ENCODE measurements at regions of chr9 and their contacts with region 1.

Region 1: GRCh38 chr9:130805510-130806326 is 29.3 kb upstream of the ABL1 start:
- DNase-seq: no peak
- H3K4me3 ChIP-seq: no peak overlapping the region
- H3K27ac ChIP-seq: no peak overlapping the region
- H3K4me1 ChIP-seq: no peaks in the 10 kb centered on the region
- H3K27me3 ChIP-seq: no peaks in the 10 kb centered on the region
- CTCF ChIP-seq: no peak
- POLR2A ChIP-seq: no peak

Region 2: GRCh38 chr9:130785940-130786508 is 19.7 kb before region 1 on chr9:
- CTCF ChIA-PET with region 1: interaction called, 4 read pairs
- POLR2A ChIA-PET with region 1: no interaction called
- dilution Hi-C with region 1: no loop called
- intact Hi-C with region 1: loop called (anchors 2 kb)
- DNase-seq: no peak
- H3K4me3 ChIP-seq: no peak overlapping the region
- H3K27ac ChIP-seq: no peak overlapping the region
- H3K4me1 ChIP-seq: peaks cover 11% of the 10 kb centered on the region
- H3K27me3 ChIP-seq: no peaks in the 10 kb centered on the region
- CTCF ChIP-seq: no peak
- POLR2A ChIP-seq: no peak